ENCODE measurements at regions of chr11 and their contacts with region 1.

Region 1: DNA sequence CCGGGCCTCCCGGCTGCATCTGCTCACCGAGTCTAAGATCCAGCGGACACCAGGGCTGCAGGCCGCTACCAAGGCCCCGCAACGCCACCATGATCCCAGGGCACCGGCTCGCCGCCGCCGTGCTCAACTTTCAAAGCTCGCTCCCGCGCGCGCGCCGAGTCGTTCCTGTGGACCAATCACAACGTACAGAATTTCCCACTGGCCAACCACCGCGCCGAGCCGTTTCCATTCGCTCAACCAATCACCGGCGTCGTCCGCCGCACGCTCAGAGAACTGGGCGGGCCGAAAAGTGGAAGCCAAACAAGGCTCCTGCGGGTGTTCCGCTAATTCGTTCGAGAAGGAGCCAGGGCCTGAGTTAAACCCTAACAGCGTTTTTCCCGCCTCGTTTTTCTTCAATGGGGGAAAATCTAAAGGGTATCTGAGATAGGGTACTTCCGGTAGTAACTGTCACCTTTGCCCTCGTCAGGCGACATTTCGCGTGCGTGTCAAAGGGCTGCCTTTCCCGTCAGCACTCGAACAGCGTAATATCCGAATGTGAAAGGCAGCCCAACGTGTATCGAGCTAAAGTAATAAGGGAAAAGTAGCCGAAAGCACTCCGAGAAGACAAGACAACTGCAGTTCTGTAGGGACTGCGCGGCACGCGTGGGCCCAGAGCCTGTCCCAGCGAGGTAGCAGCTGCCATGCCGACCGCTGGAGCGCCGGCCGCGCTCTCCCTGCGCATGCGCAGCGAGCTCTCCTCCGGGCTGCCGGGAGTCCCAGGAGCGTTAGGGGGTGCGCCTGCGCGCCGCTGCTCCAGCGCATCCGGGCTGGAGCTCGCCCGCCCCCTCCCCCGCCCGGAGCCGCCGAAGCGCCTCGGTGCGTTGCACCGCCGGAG is at the starts of genes NCAPD3 and VPS26B:
- DNase-seq: peak; percentile 90 to 92
- H3K4me3 ChIP-seq: peak within 1 kb of the TSS; percentile 84
- H3K27ac ChIP-seq: peak within 1 kb of the TSS; percentile 46; the same call in 1 of the 2 replicates
- H3K4me1 ChIP-seq: peaks cover 21% of the 10 kb centered on the region
- H3K27me3 ChIP-seq: no peaks in the 10 kb centered on the region
- CTCF ChIP-seq: no peak
- total RNA-seq, gene NCAPD3: 40.6 and 49.6 TPM in 2 replicates
- total RNA-seq, gene VPS26B: 28.6 and 28.8 TPM in 2 replicates

Region 2: GRCh38 chr11:134253188-134253993 is 29.3 kb after region 1 on chr11 and contains the starts of genes ACAD8 and THYN1:
- CTCF ChIA-PET with region 1: no interaction called
- POLR2A ChIA-PET with region 1: interaction called, 11 read pairs
- intact Hi-C with region 1: loop called (anchors 2 kb)
- DNase-seq: peak; percentile 92
- H3K4me3 ChIP-seq: peak within 1 kb of the TSS; percentile 73
- H3K27ac ChIP-seq: no peak within 1 kb of the TSS
- H3K4me1 ChIP-seq: peaks cover 15% of the 10 kb centered on the region
- H3K27me3 ChIP-seq: no peaks in the 10 kb centered on the region
- CTCF ChIP-seq: peak; percentile 39; the same call in 1 of the 2 replicates
- total RNA-seq, gene ACAD8: 16.1 and 17.2 TPM in 2 replicates
- total RNA-seq, gene THYN1: 29.8 and 41.2 TPM in 2 replicates

Region 3: GRCh38 chr11:134273317-134273712 is 49.2 kb after region 1 on chr11:
- CTCF ChIA-PET with region 1: no interaction called
- POLR2A ChIA-PET with region 1: interaction called, 10 read pairs
- intact Hi-C with region 1: no loop called
- DNase-seq: no peak
- H3K4me3 ChIP-seq: no peak overlapping the region
- H3K27ac ChIP-seq: no peak overlapping the region
- H3K4me1 ChIP-seq: peaks cover 1% of the 10 kb centered on the region; the same call in 1 of the 2 replicates
- H3K27me3 ChIP-seq: no peaks in the 10 kb centered on the region
- CTCF ChIP-seq: no peak

Region 4: GRCh38 chr11:134742224-134742612 is 518.1 kb after region 1 on chr11:
- CTCF ChIA-PET with region 1: no interaction called
- POLR2A ChIA-PET with region 1: no interaction called
- intact Hi-C with region 1: no loop called
- DNase-seq: no peak
- H3K4me3 ChIP-seq: no peak overlapping the region
- H3K27ac ChIP-seq: no peak overlapping the region
- H3K4me1 ChIP-seq: no peaks in the 10 kb centered on the region
- H3K27me3 ChIP-seq: peaks cover 43% of the 10 kb centered on the region
- CTCF ChIP-seq: no peak